A549 (cell line): ENCODE measurements at regions of chr17 and their contacts with region 1.

Region 1: DNA sequence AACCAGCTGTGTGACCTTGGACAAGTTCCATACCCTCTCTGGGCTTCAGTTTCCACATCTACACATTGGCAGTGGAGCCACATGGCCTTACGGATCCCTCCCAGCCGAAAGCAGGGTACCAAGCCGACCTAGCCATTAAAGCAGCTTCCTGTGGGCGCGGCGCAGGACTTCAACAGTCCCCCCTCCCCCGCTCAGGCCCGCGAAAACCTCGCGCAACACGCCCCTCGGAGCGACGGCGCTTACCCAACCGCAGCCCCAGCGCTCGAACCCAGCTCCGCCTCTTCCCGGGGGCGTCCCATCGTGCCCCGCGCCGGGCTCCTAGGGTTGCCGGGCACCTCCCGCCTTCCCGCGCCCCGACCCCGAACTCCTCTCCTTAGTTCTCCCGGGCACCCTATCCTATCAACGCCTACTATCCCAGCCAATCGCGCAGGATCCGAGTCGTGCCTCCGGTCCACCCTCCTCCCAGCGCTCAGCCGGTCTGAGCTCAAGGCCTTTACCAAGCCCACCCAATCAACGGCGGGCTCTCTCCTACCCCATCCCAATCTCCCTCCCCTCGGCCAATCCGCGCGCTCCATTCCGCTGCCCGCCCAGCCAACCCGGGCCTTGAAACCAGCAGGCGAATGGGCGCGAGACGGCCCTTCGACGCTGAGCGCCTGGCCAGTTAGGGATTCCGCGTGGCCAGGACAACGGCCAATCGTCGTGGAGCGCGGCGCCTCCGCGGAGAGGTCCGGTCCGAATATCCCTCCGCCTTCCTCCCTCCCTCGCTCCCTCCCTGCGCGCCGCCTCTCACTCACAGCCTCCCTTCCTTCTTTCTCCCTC is at the start of gene KPNB1:
- DNase-seq: peak; percentile 97 to 100
- ATAC-seq: peak; percentile 87 to 93
- H3K4me3 ChIP-seq: peak within 1 kb of the TSS; percentile 69
- H3K27ac ChIP-seq: peak within 1 kb of the TSS; percentile 92 to 95
- H3K4me1 ChIP-seq: peaks cover 37% of the 10 kb centered on the region
- CTCF ChIP-seq: no peak
- EP300 ChIP-seq: no peak
- POLR2A ChIP-seq: peak; percentile 71
- RAD21 ChIP-seq: 0 out of 5 replicates have a peak, but pooled peaks of 1 of the 2 experiments have one; percentile 7
- polyA plus RNA-seq, gene KPNB1: 358 and 452 TPM in 2 replicates

Region 2: DNA sequence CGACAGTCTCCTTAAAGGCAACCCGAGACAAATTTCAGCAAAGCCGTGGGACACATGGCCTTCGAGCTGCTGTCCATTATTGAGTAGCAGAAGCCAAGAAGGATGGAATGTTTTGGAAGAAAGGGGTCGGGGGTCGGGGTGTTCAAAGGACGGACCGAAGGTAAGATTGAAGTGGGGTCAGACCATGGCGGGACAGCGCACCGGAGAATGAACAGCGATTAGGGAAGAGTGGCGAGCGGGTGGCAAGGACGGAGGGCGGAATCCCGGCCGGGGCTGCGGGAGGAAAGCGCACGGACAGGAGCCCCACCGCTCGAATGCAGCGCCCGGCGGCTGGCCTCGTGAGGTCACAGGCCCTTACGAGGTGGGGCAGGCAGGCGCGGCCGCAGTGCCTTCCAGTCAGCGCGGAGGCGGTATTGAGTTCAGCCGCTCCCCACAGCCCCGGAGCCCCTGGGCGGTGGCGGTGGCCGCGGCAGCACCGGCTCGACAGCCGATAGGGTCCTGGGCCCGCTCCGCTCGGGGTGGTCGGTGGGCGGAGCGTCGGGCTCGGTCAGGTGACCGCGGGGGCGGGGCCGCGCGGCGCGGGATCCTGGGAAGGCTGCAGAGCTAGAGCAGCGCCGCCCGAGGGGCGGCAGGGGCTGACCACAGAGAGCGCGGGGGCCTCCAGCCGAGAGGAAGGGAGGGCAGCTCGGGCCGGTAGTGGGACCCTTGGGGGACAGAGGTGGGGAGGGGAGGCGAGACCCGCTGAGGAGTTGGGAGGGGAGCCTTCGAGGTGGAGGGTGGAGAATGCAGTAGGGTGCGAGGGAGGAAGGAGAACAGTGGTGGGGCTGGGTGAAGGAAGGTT is 325.8 kb before region 1 on chr17 and contains the start of gene EFCAB13:
- CTCF ChIA-PET with region 1: no interaction called
- POLR2A ChIA-PET with region 1: interaction called, 10 read pairs
- DNase-seq: peak; percentile 83 to 96
- ATAC-seq: peak; percentile 95 to 97
- H3K4me3 ChIP-seq: peak within 1 kb of the TSS; percentile 80
- H3K27ac ChIP-seq: peak within 1 kb of the TSS; percentile 91 to 97
- H3K4me1 ChIP-seq: peaks cover 10% of the 10 kb centered on the region; the same call in 2 of the 3 replicates
- CTCF ChIP-seq: peak; percentile 35; the same call in 1 of the 3 replicates
- EP300 ChIP-seq: no peak
- POLR2A ChIP-seq: peak; percentile 86
- RAD21 ChIP-seq: no peak; a peak in 2 of 5 replicates
- polyA plus RNA-seq, gene EFCAB13: 4.1 and 6.0 TPM in 2 replicates

Region 3: DNA sequence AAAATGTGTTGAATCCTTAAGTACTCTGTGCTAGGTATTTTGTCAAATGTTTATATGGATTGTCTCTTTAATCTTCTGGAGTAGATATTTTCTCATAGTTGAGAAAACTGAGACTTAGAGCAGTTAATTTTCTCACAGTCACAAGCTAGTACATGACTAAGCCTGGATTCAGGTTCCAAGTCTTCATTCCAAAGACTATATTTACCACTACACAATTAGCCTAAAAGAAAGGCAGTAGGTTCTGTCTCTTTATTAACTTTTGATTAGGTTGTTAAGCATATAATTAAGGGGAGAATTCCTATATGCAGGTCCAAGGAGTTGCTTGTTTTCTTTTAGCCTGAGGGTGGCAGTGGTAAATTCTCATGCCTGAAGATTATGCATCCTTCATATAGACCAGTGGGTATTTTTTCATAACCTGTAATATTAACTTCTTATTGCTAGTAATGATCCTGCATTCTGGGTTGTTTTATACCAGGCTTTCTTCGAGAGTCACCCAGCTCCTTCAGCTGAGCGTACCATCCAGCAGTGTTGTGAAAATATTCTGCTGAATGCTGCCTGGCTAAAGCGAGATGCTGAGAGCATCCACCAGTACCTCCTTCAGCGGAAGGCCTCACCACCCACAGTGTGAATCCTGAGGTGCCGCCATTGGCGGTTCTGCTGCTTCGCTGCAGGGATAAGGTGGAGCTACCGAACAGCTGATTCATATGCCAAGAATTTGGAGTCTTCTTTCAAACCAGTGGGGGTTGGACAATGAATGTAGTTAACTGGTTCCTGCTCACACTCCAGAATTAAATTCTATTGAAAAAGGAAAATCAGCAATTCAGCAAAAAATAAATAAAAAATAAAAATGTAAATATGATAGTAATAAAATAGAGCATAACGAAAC is 27.8 kb before region 1 on chr17:
- CTCF ChIA-PET with region 1: interaction called, 19 read pairs
- POLR2A ChIA-PET with region 1: interaction called, 18 read pairs
- DNase-seq: peak; percentile 88 to 91
- ATAC-seq: peak; percentile 92 to 96
- H3K4me3 ChIP-seq: no peak overlapping the region
- H3K27ac ChIP-seq: peak overlapping the region; percentile 61 to 85
- H3K4me1 ChIP-seq: peaks cover 34% of the 10 kb centered on the region
- CTCF ChIP-seq: peak; percentile 27; the same call in 1 of the 3 replicates
- EP300 ChIP-seq: no peak
- POLR2A ChIP-seq: no peak
- RAD21 ChIP-seq: no peak

Region 4: GRCh38 chr17:47687748-47688147 is 38.4 kb after region 1 on chr17:
- CTCF ChIA-PET with region 1: no interaction called
- POLR2A ChIA-PET with region 1: interaction called, 12 read pairs
- DNase-seq: no peak
- ATAC-seq: peak; percentile 47 to 57
- H3K4me3 ChIP-seq: no peak overlapping the region
- H3K27ac ChIP-seq: no peak overlapping the region
- H3K4me1 ChIP-seq: peaks cover 31% of the 10 kb centered on the region
- CTCF ChIP-seq: no peak
- EP300 ChIP-seq: no peak
- POLR2A ChIP-seq: no peak
- RAD21 ChIP-seq: no peak